Activated CD8-positive, alpha-beta memory T cell treated with anti-CD3 and anti-CD28 coated beads, Interleukin-2, amount 10 ng/mL, durations not matched to agents 7 days and 5 days (primary cell): ENCODE measurements at regions of chr12 and their contacts with region 1.

Region 1: GRCh38 chr12:21677622-21678277 is 20.1 kb upstream of the LDHB start:
- DNase-seq: no peak
- ATAC-seq: no peak
- H3K4me3 Mint-ChIP-seq: no peak overlapping the region
- H3K27ac Mint-ChIP-seq: no peak overlapping the region
- H3K4me1 Mint-ChIP-seq: peaks cover 25% of the 10 kb centered on the region
- H3K27me3 Mint-ChIP-seq: no peaks in the 10 kb centered on the region

Region 2: GRCh38 chr12:21248679-21249078 is 429.1 kb before region 1 on chr12:
- CTCF ChIA-PET with region 1: interaction called, 15 read pairs
- DNase-seq: no peak
- ATAC-seq: no peak
- H3K4me3 Mint-ChIP-seq: no peak overlapping the region
- H3K27ac Mint-ChIP-seq: no peak overlapping the region
- H3K4me1 Mint-ChIP-seq: no peaks in the 10 kb centered on the region
- H3K27me3 Mint-ChIP-seq: peaks cover 7% of the 10 kb centered on the region

Region 3: DNA sequence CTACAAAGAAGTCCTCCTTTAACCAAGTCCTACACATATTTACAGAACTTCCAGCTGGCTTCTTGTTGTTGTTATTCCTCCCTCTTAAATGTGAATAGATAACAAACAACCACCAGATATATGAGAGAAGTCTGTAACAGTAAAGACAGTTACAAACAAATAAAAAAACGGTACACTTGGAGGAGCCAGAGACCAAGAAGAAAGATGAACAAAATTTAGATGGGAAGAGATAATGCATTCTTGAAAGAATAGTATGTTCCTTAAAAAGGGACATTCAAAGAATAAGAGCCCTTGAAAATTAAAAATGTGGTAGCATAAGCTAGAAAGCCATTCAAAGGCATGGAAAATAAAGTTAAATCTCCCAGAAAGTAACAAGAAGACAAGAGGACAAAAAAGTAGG is 369.0 kb before region 1 on chr12:
- CTCF ChIA-PET with region 1: interaction called, 19 read pairs
- DNase-seq: no peak
- ATAC-seq: no peak
- H3K4me3 Mint-ChIP-seq: no peak overlapping the region
- H3K27ac Mint-ChIP-seq: no peak overlapping the region
- H3K4me1 Mint-ChIP-seq: no peaks in the 10 kb centered on the region
- H3K27me3 Mint-ChIP-seq: peaks cover 10% of the 10 kb centered on the region

Region 4: DNA sequence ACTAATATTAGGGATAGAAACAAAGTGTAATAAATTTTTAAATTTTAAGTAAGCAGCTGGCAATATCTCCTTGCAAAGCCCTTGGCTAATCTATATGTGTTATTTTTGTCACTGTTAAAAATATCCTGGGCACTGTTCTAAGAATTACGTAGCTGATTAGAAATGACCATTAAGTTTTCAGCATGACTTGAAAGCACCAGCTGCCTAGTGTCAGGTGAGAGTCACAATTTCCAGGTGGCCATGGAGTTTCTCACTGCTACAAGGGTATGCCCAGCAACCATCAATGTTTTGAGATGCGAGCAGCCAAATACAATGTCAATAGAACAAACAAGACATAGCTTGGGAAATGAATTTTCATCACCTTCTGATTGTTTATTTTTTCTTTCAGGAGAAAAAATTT is 49.8 kb before region 1 on chr12:
- CTCF ChIA-PET with region 1: no interaction called
- DNase-seq: no peak
- ATAC-seq: no peak
- H3K4me3 Mint-ChIP-seq: no peak overlapping the region
- H3K27ac Mint-ChIP-seq: no peak overlapping the region
- H3K4me1 Mint-ChIP-seq: no peaks in the 10 kb centered on the region
- H3K27me3 Mint-ChIP-seq: no peaks in the 10 kb centered on the region

Region 5: DNA sequence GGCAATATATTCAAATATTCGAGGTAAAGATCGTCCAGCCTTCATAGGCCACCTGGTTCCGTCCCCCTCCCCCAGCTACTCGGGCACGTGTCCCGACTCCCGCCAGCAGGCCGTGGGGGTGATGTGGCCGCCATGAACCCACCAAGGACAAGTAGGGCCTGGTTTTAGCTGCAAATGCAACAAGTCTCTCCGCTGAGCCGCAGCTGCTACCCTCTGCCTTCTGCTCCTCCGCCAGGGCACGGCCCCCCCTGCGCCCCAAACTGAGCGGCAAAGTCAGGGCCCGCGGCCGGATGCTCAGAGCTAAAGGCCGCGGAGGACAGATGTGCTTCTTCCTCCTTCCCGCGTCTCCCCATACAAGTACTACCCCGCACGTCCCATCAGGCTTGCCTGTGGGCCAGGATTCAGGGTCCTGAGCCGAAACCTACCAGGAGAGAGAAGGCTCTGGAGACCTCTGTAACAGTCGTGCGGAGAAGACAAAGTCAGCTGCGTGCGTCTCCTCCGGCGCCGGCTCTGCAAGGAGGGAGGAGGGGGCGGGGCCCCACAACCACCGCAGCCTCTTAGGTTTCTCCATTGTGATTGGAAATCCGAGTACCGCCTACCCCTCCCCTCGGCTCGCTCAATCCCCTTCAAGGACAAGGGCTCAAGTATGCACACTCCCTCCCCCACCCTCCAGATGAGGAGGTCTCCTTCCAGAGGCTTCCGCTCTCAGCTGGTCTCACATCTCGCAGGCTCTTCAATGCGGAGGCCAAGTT is 20.2 kb before region 1 on chr12 and contains the start of gene LDHB:
- CTCF ChIA-PET with region 1: interaction called, 10 read pairs
- DNase-seq: peak; percentile 98
- ATAC-seq: peak; percentile 97
- H3K4me3 Mint-ChIP-seq: peak within 1 kb of the TSS; percentile 89
- H3K27ac Mint-ChIP-seq: peak within 1 kb of the TSS; percentile 100
- H3K4me1 Mint-ChIP-seq: peaks cover 36% of the 10 kb centered on the region
- H3K27me3 Mint-ChIP-seq: no peaks in the 10 kb centered on the region
- total RNA-seq, gene LDHB: 907 to 1,215 TPM

Region 6: GRCh38 chr12:21715386-21715785 is 37.6 kb after region 1 on chr12:
- CTCF ChIA-PET with region 1: no interaction called
- DNase-seq: no peak
- ATAC-seq: no peak
- H3K4me3 Mint-ChIP-seq: no peak overlapping the region
- H3K27ac Mint-ChIP-seq: no peak overlapping the region
- H3K4me1 Mint-ChIP-seq: peaks cover 4% of the 10 kb centered on the region
- H3K27me3 Mint-ChIP-seq: peaks cover 3% of the 10 kb centered on the region